HepG2 (cell line): ENCODE measurements at regions of chr12 and their contacts with region 1.

Region 1: DNA sequence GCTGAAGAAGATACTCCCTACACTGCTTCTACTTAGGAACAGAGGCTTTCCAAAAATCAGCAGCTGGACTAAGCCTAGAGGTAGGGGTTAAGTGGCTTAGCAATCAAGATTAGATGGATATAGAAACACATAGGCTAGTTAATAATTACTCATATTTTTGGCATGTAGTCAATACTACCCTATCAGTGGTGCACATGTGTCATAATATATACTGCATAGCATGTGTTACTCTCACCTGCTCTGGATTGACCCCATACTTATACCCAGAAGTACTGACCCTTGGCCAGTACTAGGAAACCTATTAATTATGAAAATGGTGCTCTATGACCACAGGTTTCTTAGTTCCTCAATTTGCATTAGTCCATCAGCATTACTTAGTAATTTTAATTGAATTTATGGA is 528.4 kb upstream of the LMO3 start:
- DNase-seq: no peak
- ATAC-seq: no peak
- H3K4me3 ChIP-seq: no peak overlapping the region
- H3K27ac ChIP-seq: no peak overlapping the region
- H3K4me1 ChIP-seq: no peaks in the 10 kb centered on the region
- H3K27me3 ChIP-seq: no peaks in the 10 kb centered on the region
- CTCF ChIP-seq: no peak
- EP300 ChIP-seq: no peak
- POLR2A ChIP-seq: no peak
- RAD21 ChIP-seq: no peak

Region 2: GRCh38 chr12:17016116-17016864 is 118.0 kb before region 1 on chr12:
- CTCF ChIA-PET with region 1: no interaction called
- POLR2A ChIA-PET with region 1: no interaction called
- in situ Hi-C with region 1: no loop called
- intact Hi-C with region 1: no loop called
- DNase-seq: no peak
- ATAC-seq: no peak
- H3K4me3 ChIP-seq: no peak overlapping the region
- H3K27ac ChIP-seq: no peak overlapping the region
- H3K4me1 ChIP-seq: no peaks in the 10 kb centered on the region
- H3K27me3 ChIP-seq: no peaks in the 10 kb centered on the region
- CTCF ChIP-seq: no peak
- EP300 ChIP-seq: no peak
- POLR2A ChIP-seq: no peak
- RAD21 ChIP-seq: no peak

Region 3: GRCh38 chr12:17076028-17076744 is 58.1 kb before region 1 on chr12:
- CTCF ChIA-PET with region 1: no interaction called
- POLR2A ChIA-PET with region 1: no interaction called
- in situ Hi-C with region 1: no loop called
- intact Hi-C with region 1: loop called (anchors 10 kb)
- DNase-seq: peak; percentile 8
- ATAC-seq: no peak
- H3K4me3 ChIP-seq: no peak overlapping the region
- H3K27ac ChIP-seq: no peak overlapping the region
- H3K4me1 ChIP-seq: no peaks in the 10 kb centered on the region
- H3K27me3 ChIP-seq: no peaks in the 10 kb centered on the region
- CTCF ChIP-seq: no peak
- EP300 ChIP-seq: no peak
- POLR2A ChIP-seq: no peak
- RAD21 ChIP-seq: no peak

Region 4: GRCh38 chr12:17333287-17333686 is 199.0 kb after region 1 on chr12:
- CTCF ChIA-PET with region 1: no interaction called
- POLR2A ChIA-PET with region 1: no interaction called
- in situ Hi-C with region 1: no loop called
- intact Hi-C with region 1: no loop called
- DNase-seq: no peak
- ATAC-seq: no peak
- H3K4me3 ChIP-seq: no peak overlapping the region
- H3K27ac ChIP-seq: no peak overlapping the region
- H3K4me1 ChIP-seq: no peaks in the 10 kb centered on the region
- H3K27me3 ChIP-seq: no peaks in the 10 kb centered on the region
- CTCF ChIP-seq: no peak
- EP300 ChIP-seq: no peak
- POLR2A ChIP-seq: no peak
- RAD21 ChIP-seq: no peak